Calu3 (cell line): ENCODE measurements at regions of chr2 and their contacts with region 1.

Region 1: GRCh38 chr2:63888490-63889402 is 47.0 kb downstream of the UGP2 start:
- DNase-seq: peak; percentile 59
- H3K4me3 Mint-ChIP-seq: no peak overlapping the region
- H3K27ac Mint-ChIP-seq: no peak overlapping the region
- H3K4me1 Mint-ChIP-seq: no peaks in the 10 kb centered on the region
- H3K27me3 Mint-ChIP-seq: no peaks in the 10 kb centered on the region
- CTCF ChIP-seq: peak; percentile 76

Region 2: GRCh38 chr2:63588385-63589147 is 300.2 kb before region 1 on chr2 and contains the starts of genes MDH1 and WDPCP:
- CTCF ChIA-PET with region 1: no interaction called
- intact Hi-C with region 1: loop called (anchors 10 kb)
- DNase-seq: peak; percentile 92
- H3K4me3 Mint-ChIP-seq: peak within 1 kb of the TSS; percentile 91
- H3K27ac Mint-ChIP-seq: peak within 1 kb of the TSS; percentile 93
- H3K4me1 Mint-ChIP-seq: peaks cover 18% of the 10 kb centered on the region
- H3K27me3 Mint-ChIP-seq: no peaks in the 10 kb centered on the region
- CTCF ChIP-seq: no peak
- total RNA-seq, gene MDH1: 149 and 154 TPM in 2 replicates
- total RNA-seq, gene WDPCP: 7.4 and 9.0 TPM in 2 replicates

Region 3: DNA sequence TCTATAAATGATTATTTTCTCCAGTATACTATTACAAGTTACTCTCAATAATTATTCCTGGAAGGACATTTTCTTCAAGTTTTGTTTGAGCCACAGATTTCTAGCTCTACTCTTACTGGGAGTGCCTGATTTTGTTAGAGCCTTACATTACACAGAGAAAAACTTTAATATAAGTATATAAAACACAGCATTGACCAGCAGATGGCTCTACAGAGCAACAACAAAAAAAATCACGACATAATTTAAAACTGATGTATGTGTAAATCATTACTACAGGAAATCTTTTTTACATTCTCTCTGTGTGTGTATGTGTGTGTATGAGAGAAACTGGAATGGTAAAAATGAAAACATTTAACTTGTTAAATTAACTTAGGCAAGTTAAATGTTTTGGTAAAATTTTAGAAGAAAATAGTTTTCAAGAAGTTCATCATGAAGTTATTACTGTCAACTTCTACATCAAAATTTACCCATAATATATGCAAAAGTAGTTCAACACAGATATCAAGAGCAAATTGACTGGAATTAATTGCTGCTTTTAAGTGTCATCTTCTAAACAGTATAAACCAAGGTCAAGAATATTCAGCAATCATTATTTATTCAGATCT is 196.6 kb before region 1 on chr2:
- CTCF ChIA-PET with region 1: no interaction called
- intact Hi-C with region 1: loop called (anchors 1 kb)
- DNase-seq: peak; percentile 34
- H3K4me3 Mint-ChIP-seq: no peak overlapping the region
- H3K27ac Mint-ChIP-seq: no peak overlapping the region
- H3K4me1 Mint-ChIP-seq: no peaks in the 10 kb centered on the region
- H3K27me3 Mint-ChIP-seq: no peaks in the 10 kb centered on the region
- CTCF ChIP-seq: peak; percentile 32

Region 4: DNA sequence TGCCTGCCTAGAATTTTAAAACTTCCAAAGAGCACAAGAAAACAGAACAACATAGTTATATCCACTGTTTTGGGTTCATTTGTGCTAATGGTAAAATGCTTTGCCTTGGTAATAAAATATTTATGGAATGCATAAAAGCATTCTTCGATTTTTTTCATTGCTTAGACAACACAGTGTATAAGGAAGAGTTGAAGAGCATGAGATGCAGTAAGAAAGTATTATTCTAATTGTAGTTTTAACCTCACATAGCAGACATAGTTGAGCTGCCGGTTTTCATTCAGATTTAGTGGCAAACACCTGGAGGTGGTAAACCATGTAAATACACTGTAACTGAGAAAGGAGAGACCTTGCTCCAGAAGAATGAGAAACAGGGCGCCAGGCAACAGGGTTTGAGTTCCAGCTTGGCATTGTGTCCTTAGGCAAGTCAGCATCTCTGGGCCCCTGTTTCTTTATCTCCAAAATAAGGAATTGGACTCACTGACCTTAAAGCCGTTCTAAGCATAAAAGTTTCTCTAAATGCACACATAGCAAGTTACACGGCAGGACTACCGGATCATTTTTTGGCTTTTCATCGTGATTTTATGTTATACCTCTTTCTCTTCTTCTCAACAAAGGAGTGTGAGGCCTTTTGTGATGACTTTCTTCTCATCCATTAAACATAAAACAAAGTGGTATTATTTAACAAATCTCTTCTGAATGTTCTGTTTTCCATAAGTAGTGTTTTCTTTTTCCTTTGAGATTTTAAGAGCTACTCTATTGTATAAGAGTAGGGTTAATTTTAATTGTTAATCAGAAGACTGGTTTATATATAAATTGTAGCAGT is 39.2 kb before region 1 on chr2:
- CTCF ChIA-PET with region 1: no interaction called
- intact Hi-C with region 1: loop called (anchors 5 kb)
- DNase-seq: no peak
- H3K4me3 Mint-ChIP-seq: no peak overlapping the region
- H3K27ac Mint-ChIP-seq: peak overlapping the region; percentile 60
- H3K4me1 Mint-ChIP-seq: peaks cover 43% of the 10 kb centered on the region
- H3K27me3 Mint-ChIP-seq: no peaks in the 10 kb centered on the region
- CTCF ChIP-seq: no peak